ENCODE measurements at regions of chr1 and their contacts with region 1.

Region 1: DNA sequence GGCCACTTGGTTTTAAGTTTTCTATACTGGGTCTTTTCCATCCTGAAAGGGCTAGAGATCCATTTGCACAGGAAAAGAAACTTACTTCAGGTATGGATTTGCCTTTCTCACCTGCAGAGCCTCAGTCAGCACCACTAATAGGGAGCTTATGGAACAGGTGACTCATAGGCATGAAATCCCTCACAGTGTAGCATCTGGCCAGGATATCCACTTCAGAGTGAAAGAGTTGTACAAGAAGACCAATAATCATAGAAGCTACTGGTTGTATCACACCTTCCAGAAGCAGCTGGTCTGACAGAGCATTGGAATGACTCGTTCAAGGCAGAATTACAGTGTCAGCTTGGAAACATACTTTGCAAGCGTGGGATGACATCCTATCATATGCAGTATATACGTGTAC is 26.3 kb upstream of the SYT14 start:
- DNase-seq: peak; percentile 21
- H3K4me3 Mint-ChIP-seq: no peak overlapping the region
- H3K27ac Mint-ChIP-seq: no peak overlapping the region
- H3K4me1 Mint-ChIP-seq: peaks cover 7% of the 10 kb centered on the region
- H3K27me3 Mint-ChIP-seq: no peaks in the 10 kb centered on the region
- CTCF ChIP-seq: no peak

Region 2: GRCh38 chr1:209899948-209900347 is 11.8 kb before region 1 on chr1:
- CTCF ChIA-PET with region 1: interaction called, 3 read pairs
- POLR2A ChIA-PET with region 1: interaction called, 10 read pairs
- intact Hi-C with region 1: no loop called
- DNase-seq: peak; percentile 54
- H3K4me3 Mint-ChIP-seq: no peak overlapping the region
- H3K27ac Mint-ChIP-seq: peak overlapping the region; percentile 70
- H3K4me1 Mint-ChIP-seq: peaks cover 45% of the 10 kb centered on the region
- H3K27me3 Mint-ChIP-seq: no peaks in the 10 kb centered on the region
- CTCF ChIP-seq: peak; percentile 36

Region 3: GRCh38 chr1:209926045-209926444 is 14.3 kb after region 1 on chr1:
- CTCF ChIA-PET with region 1: interaction called, 13 read pairs
- POLR2A ChIA-PET with region 1: no interaction called
- intact Hi-C with region 1: no loop called
- DNase-seq: peak; percentile 74
- H3K4me3 Mint-ChIP-seq: no peak overlapping the region
- H3K27ac Mint-ChIP-seq: no peak overlapping the region
- H3K4me1 Mint-ChIP-seq: peaks cover 14% of the 10 kb centered on the region
- H3K27me3 Mint-ChIP-seq: no peaks in the 10 kb centered on the region
- CTCF ChIP-seq: no peak